Endothelial cell of umbilical vein (primary cell): ENCODE measurements at regions of chr15 and their contacts with region 1.

Region 1: DNA sequence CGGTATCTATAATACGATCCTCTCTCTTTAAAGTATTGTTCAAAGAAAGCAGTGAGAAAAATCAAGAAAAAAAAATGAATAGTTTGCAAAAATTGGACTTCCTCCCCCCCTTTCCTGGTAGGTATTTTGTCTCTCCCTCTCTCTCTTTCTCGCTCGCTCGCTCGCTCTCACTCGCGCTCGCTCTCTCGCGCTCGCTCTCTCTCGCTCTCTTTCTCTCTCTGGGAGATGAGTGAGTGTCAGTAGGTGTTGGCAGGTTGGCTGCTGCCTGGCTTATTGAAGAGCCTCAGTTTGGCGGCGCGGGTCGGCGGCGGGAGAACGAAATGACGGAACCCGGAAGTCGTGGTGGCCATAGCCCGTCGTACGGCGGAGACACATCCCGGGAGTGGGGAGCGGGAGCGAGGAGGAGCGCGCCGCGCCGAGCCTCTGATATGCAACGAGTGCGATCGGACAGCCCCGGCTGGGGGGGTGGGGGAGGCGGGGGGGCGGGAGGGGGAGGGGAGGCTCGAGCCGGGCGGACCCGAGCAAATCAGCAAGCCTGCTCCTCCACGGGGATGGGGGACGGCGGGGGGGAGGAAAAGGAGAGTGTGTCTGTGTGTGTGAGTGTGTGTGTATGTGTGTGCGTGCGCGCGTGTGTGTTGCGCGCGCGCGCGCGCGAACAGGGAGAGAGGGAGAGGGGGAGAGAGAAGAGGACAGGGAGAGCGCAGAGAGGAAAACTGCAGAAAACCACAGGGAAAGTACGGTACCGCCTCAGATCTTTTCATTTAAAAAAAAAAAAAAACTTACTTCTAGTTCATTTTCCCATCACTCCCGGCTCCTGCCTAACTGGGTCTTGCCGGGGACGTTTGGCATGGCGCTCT is at the start of gene MEIS2:
- DNase-seq: peak; percentile 87
- H3K4me3 ChIP-seq: peak within 1 kb of the TSS; percentile 89 to 95 (median 92)
- H3K27ac ChIP-seq: peak within 1 kb of the TSS; percentile 83
- H3K4me1 ChIP-seq: peaks cover 22% of the 10 kb centered on the region
- H3K27me3 ChIP-seq: peaks cover 12 to 30% of the 10 kb centered on the region in 2 experiments
- CTCF ChIP-seq: no peak
- POLR2A ChIP-seq: no peak
- total RNA-seq, gene MEIS2: 22.5 and 27.1 TPM in 2 replicates

Region 2: GRCh38 chr15:35306361-35306981 is 1793.9 kb before region 1 on chr15:
- CTCF ChIA-PET with region 1: no interaction called
- POLR2A ChIA-PET with region 1: no interaction called
- dilution Hi-C with region 1: no loop called
- intact Hi-C with region 1: loop called (anchors 5 kb)
- DNase-seq: peak; percentile 83
- H3K4me3 ChIP-seq: peak overlapping the region in 1 of 3 experiments; percentile 12
- H3K27ac ChIP-seq: peak overlapping the region; percentile 99
- H3K4me1 ChIP-seq: peaks cover 60% of the 10 kb centered on the region
- H3K27me3 ChIP-seq: no peaks in the 10 kb centered on the region
- CTCF ChIP-seq: no peak
- POLR2A ChIP-seq: no peak

Region 3: GRCh38 chr15:36004891-36005490 is 1095.3 kb before region 1 on chr15:
- CTCF ChIA-PET with region 1: no interaction called
- POLR2A ChIA-PET with region 1: no interaction called
- dilution Hi-C with region 1: no loop called
- intact Hi-C with region 1: loop called (anchors 1 kb)
- DNase-seq: peak; percentile 87
- H3K4me3 ChIP-seq: peak overlapping the region in 1 of 3 experiments; percentile 33
- H3K27ac ChIP-seq: peak overlapping the region; percentile 91
- H3K4me1 ChIP-seq: peaks cover 29% of the 10 kb centered on the region
- H3K27me3 ChIP-seq: no peaks in the 10 kb centered on the region
- CTCF ChIP-seq: no peak
- POLR2A ChIP-seq: no peak

Region 4: DNA sequence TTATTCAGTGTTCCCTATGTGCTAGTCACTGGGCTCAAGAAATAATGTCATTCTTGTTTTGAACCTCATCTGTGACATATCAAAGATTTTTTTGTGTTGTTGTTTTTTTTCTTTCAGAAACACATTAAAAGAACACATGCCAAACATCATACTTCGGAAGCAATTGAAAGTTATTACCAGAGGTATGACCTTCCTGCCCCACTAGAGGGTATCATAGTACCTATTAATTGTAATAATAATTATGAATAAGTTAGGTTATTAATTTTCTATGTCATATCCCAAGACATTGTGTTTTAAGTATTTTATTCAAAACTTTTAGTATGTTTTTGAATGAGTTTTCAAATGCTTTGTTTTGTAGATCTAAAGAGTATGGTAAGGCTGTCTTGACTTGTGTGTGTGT is 455.2 kb before region 1 on chr15:
- CTCF ChIA-PET with region 1: no interaction called
- POLR2A ChIA-PET with region 1: no interaction called
- dilution Hi-C with region 1: no loop called
- intact Hi-C with region 1: loop called (anchors 10 kb)
- DNase-seq: peak; percentile 29
- H3K4me3 ChIP-seq: no peak overlapping the region
- H3K27ac ChIP-seq: no peak overlapping the region
- H3K4me1 ChIP-seq: no peaks in the 10 kb centered on the region
- H3K27me3 ChIP-seq: no peaks in the 10 kb centered on the region
- CTCF ChIP-seq: no peak
- POLR2A ChIP-seq: no peak

Region 5: GRCh38 chr15:37034835-37035748 is 65.2 kb before region 1 on chr15:
- CTCF ChIA-PET with region 1: no interaction called
- POLR2A ChIA-PET with region 1: no interaction called
- dilution Hi-C with region 1: no loop called
- intact Hi-C with region 1: no loop called
- DNase-seq: no peak
- H3K4me3 ChIP-seq: no peak overlapping the region
- H3K27ac ChIP-seq: no peak overlapping the region
- H3K4me1 ChIP-seq: no peaks in the 10 kb centered on the region
- H3K27me3 ChIP-seq: no peaks in the 10 kb centered on the region
- CTCF ChIP-seq: no peak
- POLR2A ChIP-seq: no peak

Region 6: GRCh38 chr15:37058316-37058985 is 41.9 kb before region 1 on chr15:
- CTCF ChIA-PET with region 1: no interaction called
- POLR2A ChIA-PET with region 1: interaction called, 5 read pairs
- dilution Hi-C with region 1: no loop called
- intact Hi-C with region 1: loop called (anchors 1 kb)
- DNase-seq: peak; percentile 71
- H3K4me3 ChIP-seq: no peak overlapping the region
- H3K27ac ChIP-seq: peak overlapping the region; percentile 73
- H3K4me1 ChIP-seq: peaks cover 17% of the 10 kb centered on the region
- H3K27me3 ChIP-seq: no peaks in the 10 kb centered on the region
- CTCF ChIP-seq: no peak
- POLR2A ChIP-seq: no peak